ENCODE measurements at regions of chr1 and their contacts with region 1.

Region 1: DNA sequence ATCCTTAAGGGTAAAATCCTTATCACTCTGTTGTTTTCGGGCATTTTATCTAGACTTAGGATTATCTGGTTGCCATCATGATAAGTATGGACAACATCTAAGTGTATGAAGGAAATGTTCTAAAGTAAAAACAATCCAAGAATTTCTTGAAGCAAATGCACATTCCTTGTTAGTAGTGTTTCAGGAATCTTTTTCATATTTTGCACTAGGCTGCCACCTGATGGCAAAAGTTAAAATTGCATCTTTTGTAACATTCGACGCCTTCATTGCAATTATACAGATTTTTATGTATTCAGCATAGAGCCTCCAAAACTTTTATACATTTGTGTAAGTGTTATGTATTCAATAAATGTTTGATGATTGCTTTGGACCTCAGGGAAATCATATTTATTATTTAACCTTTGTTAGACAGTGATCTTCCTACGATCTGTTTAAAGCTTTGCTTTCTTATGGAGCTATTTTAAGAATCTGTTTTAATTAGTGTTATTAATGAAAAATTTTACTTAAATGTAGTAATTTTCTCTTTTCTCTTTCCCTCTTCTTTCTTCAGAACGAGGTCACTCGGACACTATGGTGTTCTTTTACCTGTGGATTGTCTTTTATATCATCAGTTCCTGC is 49.4 kb upstream of the KIAA1614 start:
- DNase-seq: no peak
- ATAC-seq: no peak

Region 2: GRCh38 chr1:180515864-180516388 is 347.3 kb before region 1 on chr1:
- intact Hi-C with region 1: loop called (anchors 5 to 10 kb)
- DNase-seq: peak; percentile 58
- ATAC-seq: peak; percentile 95 to 96

Region 3: DNA sequence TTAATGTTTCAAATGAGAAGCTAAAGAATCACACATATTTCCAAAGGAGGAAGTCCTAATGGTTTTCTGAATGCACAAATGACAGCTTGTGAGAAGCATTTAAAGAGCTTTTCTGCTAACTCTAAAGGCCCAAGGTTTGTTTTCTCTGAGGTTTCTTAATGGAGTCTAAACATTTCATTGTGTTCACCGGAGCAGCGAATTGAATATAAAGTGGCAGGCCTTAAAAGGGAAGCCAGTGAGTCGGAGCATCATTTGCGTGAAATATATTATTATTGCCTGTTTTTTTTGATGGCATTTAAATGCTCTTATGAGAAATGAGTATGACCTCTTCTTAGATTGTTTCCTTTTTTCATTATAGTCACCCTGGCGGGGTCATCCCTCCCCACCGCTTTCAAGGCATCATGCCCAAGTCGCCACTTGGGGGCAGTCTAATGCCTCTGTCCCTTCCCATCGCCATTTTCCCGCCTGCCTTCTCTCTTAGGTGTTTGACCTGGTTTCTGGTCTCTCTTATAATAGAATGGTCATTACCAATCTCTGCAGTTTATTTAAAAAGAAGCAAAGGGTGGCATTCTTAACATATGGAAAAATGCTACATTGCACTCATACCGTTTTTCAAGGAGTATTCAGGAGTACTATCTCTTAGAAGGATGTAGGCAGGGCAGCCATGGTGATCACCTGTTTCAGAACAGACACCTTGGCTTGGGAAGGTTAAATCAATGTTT is 329.8 kb before region 1 on chr1:
- intact Hi-C with region 1: loop called (anchors 5 kb)
- DNase-seq: peak; percentile 70
- ATAC-seq: peak; percentile 81 to 86

Region 4: DNA sequence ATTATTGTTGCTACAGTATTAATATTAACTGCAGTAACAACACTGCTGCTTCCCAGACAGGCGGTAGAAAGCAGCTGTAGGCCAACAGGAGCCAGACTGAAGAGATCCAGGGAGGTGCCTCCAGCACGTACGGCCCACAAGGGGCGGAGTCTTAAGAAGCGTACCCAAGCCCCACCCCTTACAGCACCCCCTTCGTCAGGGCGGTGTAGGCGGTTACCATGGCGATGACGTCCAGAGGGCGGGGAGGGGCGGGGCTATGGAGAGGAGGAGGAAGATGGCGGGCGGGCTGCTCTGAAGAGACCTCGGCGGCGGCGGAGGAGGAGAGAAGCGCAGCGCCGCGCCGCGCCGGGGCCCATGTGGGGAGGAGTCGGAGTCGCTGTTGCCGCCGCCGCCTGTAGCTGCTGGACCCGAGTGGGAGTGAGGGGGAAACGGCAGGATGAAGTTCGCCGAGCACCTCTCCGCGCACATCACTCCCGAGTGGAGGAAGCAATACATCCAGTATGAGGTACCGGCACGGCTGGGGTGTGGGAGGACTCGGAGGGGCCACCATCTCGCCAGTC is 231.4 kb before region 1 on chr1 and contains the start of gene XPR1:
- intact Hi-C with region 1: loop called (anchors 5 to 10 kb)
- DNase-seq: peak; percentile 98
- ATAC-seq: peak; percentile 99 to 100
- total RNA-seq, gene XPR1: 20.5 to 25.4 TPM